Psoas muscle (tissue), 8 donors: ENCODE measurements at regions of chr16 and their contacts with region 1.

Region 1: DNA sequence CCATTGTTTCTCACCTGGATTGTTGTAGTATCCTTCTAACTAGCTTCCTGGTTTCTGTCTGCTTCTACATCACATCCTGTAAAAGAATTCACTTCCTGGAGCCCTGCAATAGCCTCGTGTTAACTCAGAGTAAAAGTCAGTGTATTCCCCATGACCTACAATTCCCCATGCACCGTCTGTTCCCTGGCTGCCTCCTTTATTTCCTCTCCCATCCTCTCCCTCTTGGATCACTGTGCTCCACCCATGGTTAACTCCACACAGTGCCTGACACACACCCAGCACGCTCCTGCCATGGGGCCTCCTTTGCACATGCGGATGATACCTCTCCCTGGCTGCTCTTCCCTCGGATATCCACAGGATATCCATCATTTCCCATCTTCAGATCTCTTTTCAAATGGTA is 301.4 kb upstream of the IRX3 start:
- DNase-seq: no peak
- ATAC-seq: no peak
- H3K4me3 ChIP-seq: no peak overlapping the region
- H3K27ac ChIP-seq: no peak overlapping the region
- H3K4me1 ChIP-seq: no peaks in the 10 kb centered on the region
- H3K27me3 ChIP-seq: no peaks in the 10 kb centered on the region
- CTCF ChIP-seq: no peak

Region 2: GRCh38 chr16:54620197-54620596 is 32.2 kb after region 1 on chr16:
- intact Hi-C with region 1: loop called in 1 of 2 experiments (anchors 1 kb)
- DNase-seq: no peak
- ATAC-seq: no peak
- H3K4me3 ChIP-seq: no peak overlapping the region
- H3K27ac ChIP-seq: no peak overlapping the region
- H3K4me1 ChIP-seq: no peaks in the 10 kb centered on the region
- H3K27me3 ChIP-seq: peaks cover 0 to 5% (median 0%) of the 10 kb centered on the region in 3 donors
- CTCF ChIP-seq: no peak

Region 3: DNA sequence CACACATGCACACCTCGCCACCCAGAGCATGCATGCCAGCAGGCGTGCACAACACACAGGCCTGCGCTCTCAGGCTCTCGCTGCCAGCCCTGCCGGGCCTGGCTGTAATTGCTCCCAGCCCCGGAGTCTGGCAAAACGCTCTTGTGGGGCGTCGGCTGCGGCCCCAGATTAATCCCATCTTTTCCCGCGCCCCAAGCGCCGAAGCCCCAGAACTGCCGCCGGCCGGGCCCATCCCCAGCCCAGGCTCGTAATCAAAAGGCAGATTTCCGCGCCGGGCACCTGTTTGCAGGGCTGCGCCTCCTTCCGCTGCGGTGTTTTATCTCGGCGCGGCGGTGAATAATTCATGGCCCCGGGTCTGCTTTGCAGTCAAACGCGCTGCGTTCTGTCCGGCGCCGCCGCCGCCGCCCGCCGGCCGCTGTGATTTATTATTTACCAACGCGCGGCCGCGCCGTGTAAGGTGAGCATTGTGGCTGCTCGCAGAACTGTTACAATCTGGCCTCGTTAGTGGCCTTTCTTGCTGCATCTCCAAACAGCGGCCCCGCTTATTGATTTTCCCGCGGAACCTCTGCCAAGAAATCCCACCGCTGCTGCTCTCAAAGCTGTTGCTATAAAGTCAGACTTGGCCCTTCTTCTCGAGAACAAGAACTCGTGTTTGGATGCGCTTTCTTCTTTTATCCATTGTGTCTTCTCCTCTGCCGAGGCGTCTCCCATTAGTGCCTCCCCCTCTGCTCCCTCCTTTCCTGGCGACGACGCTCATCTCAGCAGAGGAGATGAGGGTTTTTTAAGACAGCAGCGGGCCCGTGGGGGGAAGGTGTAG is 468.8 kb after region 1 on chr16:
- intact Hi-C with region 1: no loop called
- DNase-seq: no peak
- ATAC-seq: peak; percentile 30 to 60 (median 41)
- H3K4me3 ChIP-seq: peak overlapping the region; percentile 61
- H3K27ac ChIP-seq: no peak overlapping the region
- H3K4me1 ChIP-seq: no peaks in the 10 kb centered on the region
- H3K27me3 ChIP-seq: peaks cover 0 to 22% (median 1%) of the 10 kb centered on the region in 3 donors
- CTCF ChIP-seq: no peak